Activated CD4-positive, alpha-beta memory T cell treated with anti-CD3 and anti-CD28 coated beads for 36 hours (primary cell): ENCODE measurements at regions of chr18 and their contacts with region 1.

Region 1: GRCh38 chr18:3604498-3605408 is 154.8 kb downstream of the TGIF1 start:
- DNase-seq: peak; percentile 58
- H3K4me3 Mint-ChIP-seq: no peak overlapping the region
- H3K27ac Mint-ChIP-seq: no peak overlapping the region
- H3K4me1 Mint-ChIP-seq: peaks cover 15% of the 10 kb centered on the region
- H3K27me3 Mint-ChIP-seq: no peaks in the 10 kb centered on the region

Region 2: GRCh38 chr18:3652380-3653262 is 47.9 kb after region 1 on chr18:
- CTCF ChIA-PET with region 1: no interaction called
- POLR2A ChIA-PET with region 1: interaction called, 8 read pairs
- intact Hi-C with region 1: loop called (anchors 2 kb)
- DNase-seq: peak; percentile 88
- H3K4me3 Mint-ChIP-seq: peak overlapping the region; percentile 9
- H3K27ac Mint-ChIP-seq: peak overlapping the region; percentile 83
- H3K4me1 Mint-ChIP-seq: peaks cover 34% of the 10 kb centered on the region
- H3K27me3 Mint-ChIP-seq: no peaks in the 10 kb centered on the region